K562 (cell line): ENCODE measurements at regions of chr2 and their contacts with region 1.

Region 1: DNA sequence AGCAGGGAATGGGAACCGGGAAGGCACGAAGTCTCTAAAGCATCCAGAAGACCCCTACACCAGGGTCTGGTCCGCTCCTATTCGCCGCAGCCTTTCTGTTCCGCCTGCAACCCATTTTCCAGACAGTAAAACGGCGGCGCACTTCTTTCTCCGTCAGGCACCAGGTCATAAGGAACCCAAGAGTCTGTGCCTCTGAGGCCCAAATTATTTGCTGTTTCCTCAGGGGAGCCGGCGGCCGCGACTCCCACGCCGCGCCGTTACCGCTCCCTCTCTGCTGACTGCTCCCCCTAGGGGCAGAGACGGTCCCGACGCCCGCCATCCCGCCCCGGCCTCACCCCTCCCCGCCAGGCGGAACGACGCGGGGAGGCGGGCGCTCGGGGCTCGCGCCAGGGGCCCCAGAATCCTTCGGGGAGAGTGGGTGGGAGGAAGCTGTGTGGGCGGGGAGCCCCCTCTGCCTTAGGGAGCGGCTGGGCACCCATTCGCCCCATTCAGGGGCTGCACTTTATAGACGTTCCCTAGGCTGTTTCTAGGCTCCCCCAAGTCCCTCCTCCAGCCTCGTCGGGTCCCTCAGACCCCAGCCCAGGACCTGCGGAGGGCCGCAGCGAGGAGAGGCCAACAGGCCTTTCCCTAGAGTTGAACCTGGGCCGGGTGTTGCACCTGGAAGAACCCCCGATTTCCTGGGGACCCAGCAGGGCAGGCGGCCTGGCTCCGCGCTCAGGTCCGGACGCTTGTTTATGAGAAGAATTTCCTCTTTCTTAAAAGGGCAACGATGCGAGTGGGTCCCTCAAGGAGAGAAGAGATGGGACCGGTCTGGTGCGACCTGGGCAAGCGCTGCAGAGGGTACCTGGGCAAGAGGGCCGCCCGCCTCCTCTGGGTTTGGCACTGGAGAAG is 3.6 kb upstream of the CTDSP1 start:
- DNase-seq: peak; percentile 78 to 95 (median 84)
- ATAC-seq: peak; percentile 71
- H3K4me3 ChIP-seq: peak overlapping the region; percentile 57
- H3K27ac ChIP-seq: peak overlapping the region; percentile 99
- H3K4me1 ChIP-seq: peaks cover 20 to 71% of the 10 kb centered on the region in 2 experiments
- H3K27me3 ChIP-seq: no peaks in the 10 kb centered on the region
- CTCF ChIP-seq: peak; percentile 73 to 79 (median 79)
- EP300 ChIP-seq: peak; percentile 52; the same call in 1 of the 2 replicates
- POLR2A ChIP-seq: peak; percentile 60; the same call in 1 of the 2 replicates
- RAD21 ChIP-seq: peak; percentile 62 to 82

Region 2: GRCh38 chr2:217585362-217585761 is 810.7 kb before region 1 on chr2:
- CTCF ChIA-PET with region 1: no interaction called
- POLR2A ChIA-PET with region 1: no interaction called
- in situ Hi-C with region 1: no loop called
- intact Hi-C with region 1: no loop called
- DNase-seq: no peak
- ATAC-seq: no peak
- H3K4me3 ChIP-seq: no peak overlapping the region
- H3K27ac ChIP-seq: no peak overlapping the region
- H3K4me1 ChIP-seq: no peaks in the 10 kb centered on the region
- H3K27me3 ChIP-seq: no peaks in the 10 kb centered on the region
- CTCF ChIP-seq: no peak
- EP300 ChIP-seq: no peak
- POLR2A ChIP-seq: no peak
- RAD21 ChIP-seq: no peak

Region 3: GRCh38 chr2:218269899-218270720 is 125.9 kb before region 1 on chr2 and contains the starts of genes AAMP and PNKD:
- CTCF ChIA-PET with region 1: interaction called, 8 read pairs
- POLR2A ChIA-PET with region 1: interaction called, 6 read pairs
- in situ Hi-C with region 1: no loop called
- intact Hi-C with region 1: loop called (anchors 1 kb)
- DNase-seq: peak; percentile 94 to 98 (median 96)
- ATAC-seq: peak; percentile 91
- H3K4me3 ChIP-seq: peak within 1 kb of the TSS; percentile 84
- H3K27ac ChIP-seq: peak within 1 kb of the TSS; percentile 80
- H3K4me1 ChIP-seq: peaks cover 4 to 25% of the 10 kb centered on the region in 2 experiments; a peak in 3 of 5 replicates
- H3K27me3 ChIP-seq: no peaks in the 10 kb centered on the region
- CTCF ChIP-seq: peak in 2 of 3 experiments; percentile 25 to 37; a peak in 3 of 6 replicates
- EP300 ChIP-seq: no peak
- POLR2A ChIP-seq: peak; percentile 83
- RAD21 ChIP-seq: 0 out of 4 replicates have a peak, but pooled peaks of 1 of the 2 experiments have one; percentile 1
- polyA plus RNA-seq, gene AAMP: 5.7 to 8.9 TPM
- polyA plus RNA-seq, gene PNKD: 89.1 to 105 TPM

Region 4: GRCh38 chr2:218292048-218293014 is 103.7 kb before region 1 on chr2 and contains the start of gene TMBIM1:
- CTCF ChIA-PET with region 1: no interaction called
- POLR2A ChIA-PET with region 1: interaction called, 9 read pairs
- in situ Hi-C with region 1: loop called (anchors 5 kb)
- intact Hi-C with region 1: loop called (anchors 2 kb)
- DNase-seq: peak; percentile 83 to 89 (median 86)
- ATAC-seq: peak; percentile 79
- H3K4me3 ChIP-seq: peak within 1 kb of the TSS; percentile 62
- H3K27ac ChIP-seq: peak within 1 kb of the TSS; percentile 88
- H3K4me1 ChIP-seq: peaks cover 40 to 48% of the 10 kb centered on the region in 2 experiments
- H3K27me3 ChIP-seq: no peaks in the 10 kb centered on the region
- CTCF ChIP-seq: peak; percentile 60 to 76 (median 63)
- EP300 ChIP-seq: no peak
- POLR2A ChIP-seq: peak; percentile 51
- RAD21 ChIP-seq: peak; percentile 32 to 47
- polyA plus RNA-seq, gene TMBIM1: 14.2 to 35.6 TPM

Region 5: GRCh38 chr2:218360447-218360846 is 35.6 kb before region 1 on chr2:
- CTCF ChIA-PET with region 1: no interaction called
- POLR2A ChIA-PET with region 1: interaction called, 3 read pairs
- in situ Hi-C with region 1: no loop called
- intact Hi-C with region 1: loop called (anchors 2 kb)
- DNase-seq: peak; percentile 35 to 63 (median 40)
- ATAC-seq: peak; percentile 15; the same call in 1 of the 3 replicates
- H3K4me3 ChIP-seq: no peak overlapping the region
- H3K27ac ChIP-seq: no peak overlapping the region
- H3K4me1 ChIP-seq: peaks cover 25 to 36% of the 10 kb centered on the region in 2 experiments; a peak in 4 of 5 replicates
- H3K27me3 ChIP-seq: no peaks in the 10 kb centered on the region
- CTCF ChIP-seq: no peak
- EP300 ChIP-seq: no peak
- POLR2A ChIP-seq: no peak
- RAD21 ChIP-seq: no peak

Region 6: DNA sequence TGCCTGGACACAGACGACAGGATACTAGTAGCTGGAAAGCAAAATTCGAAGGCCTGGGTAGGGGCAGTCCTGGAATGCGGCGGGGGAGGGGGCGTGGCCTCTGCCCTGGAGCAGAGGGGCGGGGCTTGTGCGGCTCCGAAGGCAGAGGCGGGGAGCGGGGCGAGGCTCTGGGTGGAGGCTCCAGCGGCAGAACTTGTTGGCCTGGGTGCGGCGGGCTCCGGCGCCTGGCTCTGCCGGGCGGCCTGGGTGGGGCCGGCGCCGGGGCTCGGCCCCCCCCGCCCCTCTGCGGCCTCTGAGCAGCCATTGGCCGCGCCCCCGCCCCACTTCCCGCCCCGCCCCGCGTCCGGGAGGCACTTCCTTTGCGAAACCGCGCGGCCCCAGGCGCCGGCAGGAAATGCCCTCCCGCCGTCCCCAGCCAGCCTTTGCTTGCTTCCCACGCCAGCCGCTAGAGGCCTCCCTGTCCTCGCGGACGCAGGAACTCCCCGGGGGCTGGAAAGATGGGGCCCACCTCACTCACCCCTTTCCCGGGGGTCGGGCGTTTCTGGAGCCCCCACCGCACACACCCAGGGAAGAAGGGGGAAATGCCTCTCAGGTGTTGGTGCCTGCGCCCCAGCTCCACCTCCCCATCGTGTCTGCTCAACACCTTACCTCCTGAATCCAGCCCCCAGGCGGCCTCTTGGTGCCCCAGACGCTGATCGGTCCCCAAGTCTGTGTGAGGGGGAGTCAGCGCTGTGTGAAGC is 10.3 kb after region 1 on chr2:
- CTCF ChIA-PET with region 1: no interaction called
- POLR2A ChIA-PET with region 1: interaction called, 7 read pairs
- in situ Hi-C with region 1: no loop called
- intact Hi-C with region 1: loop called (anchors 1 kb)
- DNase-seq: peak; percentile 86 to 93 (median 90)
- ATAC-seq: peak; percentile 93
- H3K4me3 ChIP-seq: peak overlapping the region; percentile 44
- H3K27ac ChIP-seq: peak overlapping the region; percentile 78
- H3K4me1 ChIP-seq: peaks cover 25 to 67% of the 10 kb centered on the region in 2 experiments; a peak in 4 of 5 replicates
- H3K27me3 ChIP-seq: no peaks in the 10 kb centered on the region
- CTCF ChIP-seq: peak; percentile 71 to 85 (median 76)
- EP300 ChIP-seq: no peak; the same call in 1 of the 2 replicates
- POLR2A ChIP-seq: 0 out of 2 replicates have a peak, but pooled peaks have one; percentile 0
- RAD21 ChIP-seq: peak; percentile 67 to 69

Region 7: GRCh38 chr2:218756599-218757377 is 360.7 kb after region 1 on chr2:
- CTCF ChIA-PET with region 1: no interaction called
- POLR2A ChIA-PET with region 1: no interaction called
- in situ Hi-C with region 1: no loop called
- intact Hi-C with region 1: no loop called
- DNase-seq: no peak
- ATAC-seq: no peak; the same call in 2 of the 3 replicates
- H3K4me3 ChIP-seq: no peak overlapping the region
- H3K27ac ChIP-seq: no peak overlapping the region
- H3K4me1 ChIP-seq: no peaks in the 10 kb centered on the region
- H3K27me3 ChIP-seq: no peaks in the 10 kb centered on the region
- CTCF ChIP-seq: no peak
- EP300 ChIP-seq: no peak
- POLR2A ChIP-seq: no peak
- RAD21 ChIP-seq: no peak

Region 8: DNA sequence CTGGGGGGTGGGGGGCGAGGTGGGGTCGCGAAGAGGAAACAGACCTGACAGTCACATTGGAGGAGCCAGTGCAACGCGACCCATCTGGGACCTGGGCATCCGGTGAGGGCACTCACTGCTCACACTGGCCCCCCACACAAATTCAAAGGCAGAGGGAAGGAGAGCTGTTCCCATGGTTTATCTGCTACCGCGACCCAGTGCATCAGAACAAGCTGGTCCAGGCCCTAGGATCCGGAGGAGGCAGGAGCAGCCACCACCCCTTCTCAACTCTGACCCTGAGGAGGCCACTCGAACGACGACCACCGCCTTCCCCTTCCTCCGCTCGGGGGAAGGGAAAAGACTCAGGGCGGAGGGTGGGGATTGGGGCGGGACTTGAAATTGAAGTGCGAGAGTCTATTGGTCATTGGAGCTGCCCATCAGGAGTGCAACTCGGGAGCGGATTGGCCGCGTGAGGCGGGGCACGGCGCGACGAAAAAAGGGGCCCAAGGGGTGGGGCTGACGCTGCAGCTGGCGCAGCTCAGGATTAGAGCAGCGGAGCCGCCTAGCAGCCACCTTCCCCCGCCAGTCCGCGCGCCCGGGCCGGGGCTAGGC is 563.2 kb after region 1 on chr2 and contains the start of gene CDK5R2:
- CTCF ChIA-PET with region 1: no interaction called
- POLR2A ChIA-PET with region 1: no interaction called
- in situ Hi-C with region 1: no loop called
- intact Hi-C with region 1: no loop called
- DNase-seq: peak; percentile 87 to 99 (median 98)
- ATAC-seq: peak; percentile 96
- H3K4me3 ChIP-seq: peak within 1 kb of the TSS; percentile 38
- H3K27ac ChIP-seq: no peak within 1 kb of the TSS
- H3K4me1 ChIP-seq: peaks cover 9 to 31% of the 10 kb centered on the region in 2 experiments; a peak in 4 of 5 replicates
- H3K27me3 ChIP-seq: peaks cover 7 to 29% of the 10 kb centered on the region in 2 experiments; a peak in 4 of 5 replicates
- CTCF ChIP-seq: no peak
- EP300 ChIP-seq: no peak
- POLR2A ChIP-seq: no peak
- RAD21 ChIP-seq: no peak
- polyA plus RNA-seq, gene CDK5R2: not detected